ENCODE measurements at regions of chr16 and their contacts with region 1.

Region 1: GRCh38 chr16:180938-181667 is 844 bp downstream of the HBQ1 start:
- DNase-seq: peak; percentile 88
- ATAC-seq: peak; percentile 78
- H3K4me3 Mint-ChIP-seq: no peak overlapping the region
- H3K27ac Mint-ChIP-seq: no peak overlapping the region
- H3K4me1 Mint-ChIP-seq: peaks cover 12% of the 10 kb centered on the region
- H3K27me3 Mint-ChIP-seq: peaks cover 24% of the 10 kb centered on the region

Region 2: GRCh38 chr16:117379-118365 is 63.4 kb before region 1 on chr16:
- CTCF ChIA-PET with region 1: interaction called, 17 read pairs
- POLR2A ChIA-PET with region 1: no interaction called
- DNase-seq: peak; percentile 74
- ATAC-seq: peak; percentile 90
- H3K4me3 Mint-ChIP-seq: no peak overlapping the region
- H3K27ac Mint-ChIP-seq: no peak overlapping the region
- H3K4me1 Mint-ChIP-seq: no peaks in the 10 kb centered on the region
- H3K27me3 Mint-ChIP-seq: no peaks in the 10 kb centered on the region